Aorta (tissue), 5 donors: ENCODE measurements at regions of chr11 and their contacts with region 1.

Region 1: DNA sequence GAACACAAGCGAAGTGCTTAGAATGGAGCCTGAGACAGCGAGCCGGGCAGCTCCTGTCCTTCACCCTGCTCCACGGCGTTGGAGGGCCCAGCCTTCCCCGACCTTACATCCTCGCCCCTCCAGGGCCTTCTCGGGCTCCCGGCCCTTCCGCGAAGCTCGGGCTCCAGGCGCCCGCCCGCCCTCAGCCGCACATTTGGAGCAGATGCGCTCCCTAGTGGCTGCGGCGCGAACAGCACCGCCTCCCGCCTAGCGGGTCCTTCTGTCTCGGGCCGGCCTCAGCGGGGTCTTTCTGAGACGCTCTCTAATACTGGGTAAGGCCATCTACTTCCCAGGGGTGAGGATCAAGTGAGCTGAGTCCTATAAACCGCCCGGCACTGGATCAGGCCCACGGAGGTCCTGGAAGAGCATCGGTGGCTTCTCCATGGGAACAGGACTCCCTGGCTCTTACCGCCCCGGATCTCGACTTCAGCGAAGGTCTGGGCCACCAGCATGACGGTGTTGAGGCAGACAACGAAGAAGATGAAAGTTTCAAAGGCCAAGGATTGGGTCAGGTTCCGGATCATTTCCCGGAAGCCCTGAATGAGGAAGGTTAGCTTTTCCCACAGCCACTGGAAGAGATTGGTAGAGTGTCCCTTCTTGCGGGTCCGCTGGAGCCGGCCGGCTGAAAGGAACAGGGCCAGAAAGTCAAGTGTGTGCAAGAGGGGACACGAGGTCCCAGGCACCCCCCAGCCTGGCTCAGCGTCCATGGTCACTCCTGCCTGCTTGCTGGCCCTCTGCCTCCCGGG is 3.7 kb downstream of the CATSPER1 start:
- DNase-seq: peak; percentile 83 to 94
- ATAC-seq: peak; percentile 90
- H3K4me3 ChIP-seq: no peak overlapping the region
- H3K27ac ChIP-seq: no peak overlapping the region
- H3K4me1 ChIP-seq: no peaks in the 10 kb centered on the region
- H3K27me3 ChIP-seq: no peaks in the 10 kb centered on the region

Region 2: DNA sequence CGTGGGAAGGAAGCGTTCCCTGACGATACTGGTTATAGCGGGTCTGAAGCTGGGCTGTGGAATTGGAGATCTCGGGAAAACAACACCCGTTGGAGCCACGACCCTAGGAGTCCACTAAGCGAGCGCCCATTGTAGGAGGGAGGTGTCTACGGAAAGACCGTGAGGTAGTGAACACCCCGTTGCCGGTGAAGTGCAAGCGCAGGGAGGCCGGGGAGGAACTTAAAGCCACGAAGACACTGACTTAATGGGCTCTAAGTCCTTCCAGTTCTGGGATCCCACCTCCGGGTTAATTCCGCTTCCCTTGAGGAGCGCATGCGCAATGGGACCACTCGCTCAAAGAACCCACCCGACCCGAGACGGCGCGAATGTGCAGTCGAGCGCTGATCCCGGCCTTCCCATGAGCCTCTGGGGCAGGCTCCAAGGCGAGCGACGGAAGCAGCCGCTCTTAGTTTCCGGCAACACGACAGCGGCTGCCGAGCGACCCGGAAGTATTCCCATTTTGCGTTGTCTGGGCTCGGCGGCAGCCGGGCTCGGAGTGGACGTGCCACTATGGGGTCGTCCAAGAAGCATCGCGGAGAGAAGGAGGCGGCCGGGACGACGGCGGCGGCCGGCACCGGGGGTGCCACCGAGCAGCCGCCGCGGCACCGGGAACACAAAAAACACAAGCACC is 61.2 kb before region 1 on chr11 and contains the start of gene SART1:
- intact Hi-C with region 1: no loop called
- DNase-seq: peak; percentile 99
- ATAC-seq: peak; percentile 97
- H3K4me3 ChIP-seq: peak within 1 kb of the TSS; percentile 74 to 86
- H3K27ac ChIP-seq: peak within 1 kb of the TSS; percentile 11 to 59
- H3K4me1 ChIP-seq: no peaks in the 10 kb centered on the region
- H3K27me3 ChIP-seq: no peaks in the 10 kb centered on the region
- total RNA-seq, gene SART1: 50.9 to 52.3 TPM

Region 3: DNA sequence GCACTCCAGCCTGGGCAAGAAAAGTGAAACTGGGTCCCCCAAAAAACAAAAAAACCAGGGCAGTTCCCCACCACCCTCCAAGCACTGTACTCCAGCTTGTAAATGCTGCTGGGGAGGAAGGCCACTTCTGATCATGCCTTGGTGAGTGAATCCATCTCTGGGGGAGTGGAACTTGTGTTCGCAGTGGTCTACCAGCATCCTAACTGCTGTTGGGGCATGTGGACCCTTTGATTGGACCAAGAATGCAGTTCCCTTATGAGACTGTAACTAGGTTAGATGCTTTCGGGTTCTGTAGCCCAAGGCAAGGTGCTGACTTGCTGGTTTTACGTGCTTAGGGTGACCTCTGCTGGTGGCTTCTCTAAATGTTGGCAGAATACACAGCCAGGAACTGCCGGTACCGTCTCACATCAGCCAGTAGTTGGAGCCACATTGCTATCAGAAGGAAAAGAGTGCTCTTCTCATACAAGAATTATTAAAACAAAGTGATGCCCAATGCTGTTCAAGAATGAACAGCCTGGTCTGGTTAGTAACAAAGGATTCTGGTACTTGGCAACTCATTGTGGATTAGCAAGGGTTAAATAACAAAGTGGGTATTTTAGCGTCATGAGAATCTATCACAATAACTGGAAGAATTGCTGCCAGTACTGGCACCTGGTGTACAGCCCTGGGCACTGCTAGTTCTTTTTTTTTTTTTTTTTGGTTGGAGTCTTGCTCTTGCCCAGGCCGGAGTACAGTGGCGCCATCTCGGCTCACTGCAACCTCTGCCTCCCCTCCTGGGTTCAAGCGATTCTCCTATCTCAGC is 33.6 kb before region 1 on chr11:
- intact Hi-C with region 1: loop called (anchors 1 to 5 kb)
- DNase-seq: peak; percentile 87 to 92
- ATAC-seq: peak; percentile 96
- H3K4me3 ChIP-seq: no peak overlapping the region
- H3K27ac ChIP-seq: no peak overlapping the region
- H3K4me1 ChIP-seq: no peaks in the 10 kb centered on the region
- H3K27me3 ChIP-seq: no peaks in the 10 kb centered on the region

Region 4: GRCh38 chr11:66001942-66002647 is 20.5 kb before region 1 on chr11 and contains the starts of genes BANF1 and EIF1AD:
- intact Hi-C with region 1: loop called in 1 of 2 experiments (anchors 2 kb)
- DNase-seq: peak; percentile 94 to 95
- ATAC-seq: peak; percentile 96
- H3K4me3 ChIP-seq: peak within 1 kb of the TSS; percentile 72 to 95
- H3K27ac ChIP-seq: peak within 1 kb of the TSS; percentile 65 to 95
- H3K4me1 ChIP-seq: no peaks in the 10 kb centered on the region
- H3K27me3 ChIP-seq: no peaks in the 10 kb centered on the region
- total RNA-seq, gene BANF1: 136 to 145 TPM
- total RNA-seq, gene EIF1AD: 28.7 to 35.0 TPM

Region 5: GRCh38 chr11:66242095-66242765 is 219.6 kb after region 1 on chr11:
- intact Hi-C with region 1: no loop called
- DNase-seq: no peak
- ATAC-seq: no peak
- H3K4me3 ChIP-seq: no peak overlapping the region
- H3K27ac ChIP-seq: no peak overlapping the region
- H3K4me1 ChIP-seq: no peaks in the 10 kb centered on the region
- H3K27me3 ChIP-seq: no peaks in the 10 kb centered on the region